Sigmoid colon (tissue), 7 donors: ENCODE measurements at regions of chr5 and their contacts with region 1.

Region 1: GRCh38 chr5:138464008-138464387 is 1.3 kb upstream of the EGR1 start:
- DNase-seq: peak; percentile 98
- H3K4me3 ChIP-seq: peak overlapping the region; percentile 62 to 86 (median 76)
- H3K27ac ChIP-seq: peak overlapping the region; percentile 96 to 99 (median 98)
- H3K4me1 ChIP-seq: peaks cover 0 to 32% (median 28%) of the 10 kb centered on the region in 4 donors
- H3K27me3 ChIP-seq: no peaks in the 10 kb centered on the region
- CTCF ChIP-seq: peak; percentile 91 to 97 (median 94)
- EP300 ChIP-seq: no peak
- POLR2A ChIP-seq: peak; percentile 64 to 73

Region 2: GRCh38 chr5:138491669-138492559 is 27.9 kb after region 1 on chr5:
- intact Hi-C with region 1: loop called (anchors 1 kb)
- DNase-seq: peak; percentile 97
- H3K4me3 ChIP-seq: peak overlapping the region; percentile 47 to 59 (median 58)
- H3K27ac ChIP-seq: peak overlapping the region; percentile 74 to 80 (median 74)
- H3K4me1 ChIP-seq: peaks cover 0 to 21% (median 19%) of the 10 kb centered on the region in 4 donors
- H3K27me3 ChIP-seq: peaks cover 0 to 21% (median 6%) of the 10 kb centered on the region in 3 donors
- CTCF ChIP-seq: no peak
- EP300 ChIP-seq: no peak
- POLR2A ChIP-seq: no peak

Region 3: DNA sequence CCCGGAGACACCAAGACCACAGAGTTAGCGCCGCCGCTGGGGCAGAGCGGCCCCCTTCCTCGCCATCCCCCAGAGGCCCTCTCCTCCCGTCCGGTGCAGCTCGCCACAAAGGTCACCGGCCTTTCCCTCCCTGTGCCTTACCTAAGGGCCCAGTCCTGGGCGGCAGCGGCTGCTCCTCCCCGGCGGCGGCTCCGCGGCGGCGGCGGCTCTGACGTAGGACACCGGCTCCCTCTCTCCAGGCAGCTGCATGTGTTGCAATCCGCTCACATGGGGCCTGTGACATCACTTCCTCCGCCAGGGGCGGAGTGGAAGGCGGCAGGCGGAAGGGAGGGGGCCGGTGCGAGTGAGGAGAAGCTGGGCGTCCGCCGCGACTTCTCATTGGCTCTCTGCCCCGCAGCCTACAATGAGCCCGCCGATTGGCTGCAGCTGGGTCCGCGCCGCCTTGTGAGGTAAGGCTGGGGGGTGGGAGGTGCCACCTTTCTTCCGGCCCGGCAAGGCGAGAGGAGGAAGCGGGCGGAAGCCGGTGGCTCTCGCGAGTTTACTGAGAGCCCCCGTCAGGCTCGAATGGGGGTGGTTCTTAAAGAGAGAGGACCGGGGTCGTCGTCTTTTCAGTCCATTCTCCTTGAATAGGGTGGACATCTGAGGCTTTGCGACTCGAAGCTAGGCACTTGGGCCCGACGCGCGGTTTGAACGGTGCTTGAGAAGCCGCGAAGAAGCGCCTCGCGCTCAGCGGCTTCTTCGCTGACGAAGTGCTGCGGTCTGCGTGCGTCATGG is 79.1 kb after region 1 on chr5 and contains the start of gene ETF1:
- intact Hi-C with region 1: loop called (anchors 2 kb)
- DNase-seq: peak; percentile 100
- H3K4me3 ChIP-seq: peak within 1 kb of the TSS; percentile 85 to 99 (median 96)
- H3K27ac ChIP-seq: peak within 1 kb of the TSS; percentile 95 to 100 (median 96)
- H3K4me1 ChIP-seq: peaks cover 0 to 77% (median 70%) of the 10 kb centered on the region in 4 donors
- H3K27me3 ChIP-seq: no peaks in the 10 kb centered on the region
- CTCF ChIP-seq: no peak
- EP300 ChIP-seq: peak in 2 of 4 donors; percentile 49 to 83
- POLR2A ChIP-seq: peak; percentile 99 to 100
- total RNA-seq, gene ETF1: 67.0 to 117 (median 106) TPM